GM12878 (cell line): ENCODE measurements at regions of chr2 and their contacts with region 1.

Region 1: DNA sequence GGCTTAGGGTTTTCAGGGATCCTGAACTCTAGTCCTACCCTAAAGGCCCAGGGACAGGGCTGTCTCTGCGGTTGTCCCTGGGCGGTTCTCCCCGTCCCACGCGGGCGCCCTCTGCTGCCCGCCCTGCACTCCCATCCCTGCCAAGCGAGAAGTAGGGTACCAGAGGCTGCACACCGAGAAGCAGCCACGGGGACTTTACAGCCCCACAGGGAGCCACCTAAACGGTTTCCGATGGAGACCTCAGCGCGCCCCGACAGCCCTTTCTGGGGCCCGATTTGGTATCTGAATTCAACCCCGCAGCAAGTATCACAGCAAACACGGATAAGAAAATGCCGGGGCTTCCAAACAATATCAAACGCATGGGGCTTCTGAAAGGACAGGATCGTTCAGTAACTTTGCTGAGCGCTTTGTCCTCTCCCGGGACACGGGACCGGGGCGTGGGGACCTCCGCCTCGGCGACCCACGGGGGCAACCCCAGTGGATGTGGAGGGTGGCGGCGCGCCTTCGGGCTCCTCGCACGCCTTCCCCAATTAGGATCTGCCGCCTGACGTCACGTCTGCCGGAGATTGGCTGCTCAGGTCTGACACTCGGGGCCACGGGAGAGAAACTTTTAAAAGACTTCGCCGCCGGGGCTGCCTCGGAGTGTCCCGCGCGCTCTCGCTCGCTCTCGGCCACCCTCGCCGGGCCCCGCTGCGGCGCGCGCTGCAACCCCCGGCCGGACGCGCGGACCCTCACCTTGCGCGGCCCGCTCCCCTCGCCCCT is at the start of gene LTBP1:
- DNase-seq: no peak
- ATAC-seq: peak; percentile 94
- H3K4me3 ChIP-seq: peak within 1 kb of the TSS; percentile 65
- H3K27ac ChIP-seq: no peak within 1 kb of the TSS
- H3K4me1 ChIP-seq: peaks cover 4% of the 10 kb centered on the region; the same call in 1 of the 2 replicates
- H3K27me3 ChIP-seq: peaks cover 0 to 6% of the 10 kb centered on the region in 2 experiments
- CTCF ChIP-seq: peak; percentile 64 to 81 (median 73)
- EP300 ChIP-seq: no peak
- POLR2A ChIP-seq: no peak
- RAD21 ChIP-seq: peak; percentile 60
- polyA plus RNA-seq, gene LTBP1: not detected

Region 2: GRCh38 chr2:32553829-32554432 is 392.6 kb before region 1 on chr2:
- CTCF ChIA-PET with region 1: no interaction called
- POLR2A ChIA-PET with region 1: no interaction called
- RAD21 ChIA-PET with region 1: no interaction called
- SMC1A ChIA-PET with region 1: no interaction called
- in situ Hi-C with region 1: no loop called
- intact Hi-C with region 1: loop called (anchors 5 kb)
- DNase-seq: peak; percentile 19
- ATAC-seq: peak; percentile 99
- H3K4me3 ChIP-seq: no peak overlapping the region
- H3K27ac ChIP-seq: no peak overlapping the region
- H3K4me1 ChIP-seq: peaks cover 4% of the 10 kb centered on the region
- H3K27me3 ChIP-seq: no peaks in the 10 kb centered on the region
- CTCF ChIP-seq: peak; percentile 66 to 75 (median 70)
- EP300 ChIP-seq: no peak
- POLR2A ChIP-seq: no peak
- RAD21 ChIP-seq: peak; percentile 76

Region 3: GRCh38 chr2:32904751-32905150 is 41.7 kb before region 1 on chr2:
- CTCF ChIA-PET with region 1: no interaction called
- POLR2A ChIA-PET with region 1: no interaction called
- RAD21 ChIA-PET with region 1: no interaction called
- SMC1A ChIA-PET with region 1: no interaction called
- in situ Hi-C with region 1: no loop called
- intact Hi-C with region 1: no loop called
- DNase-seq: no peak
- ATAC-seq: no peak
- H3K4me3 ChIP-seq: no peak overlapping the region
- H3K27ac ChIP-seq: no peak overlapping the region
- H3K4me1 ChIP-seq: peaks cover 17% of the 10 kb centered on the region
- H3K27me3 ChIP-seq: no peaks in the 10 kb centered on the region
- CTCF ChIP-seq: no peak
- EP300 ChIP-seq: no peak
- POLR2A ChIP-seq: no peak
- RAD21 ChIP-seq: no peak

Region 4: DNA sequence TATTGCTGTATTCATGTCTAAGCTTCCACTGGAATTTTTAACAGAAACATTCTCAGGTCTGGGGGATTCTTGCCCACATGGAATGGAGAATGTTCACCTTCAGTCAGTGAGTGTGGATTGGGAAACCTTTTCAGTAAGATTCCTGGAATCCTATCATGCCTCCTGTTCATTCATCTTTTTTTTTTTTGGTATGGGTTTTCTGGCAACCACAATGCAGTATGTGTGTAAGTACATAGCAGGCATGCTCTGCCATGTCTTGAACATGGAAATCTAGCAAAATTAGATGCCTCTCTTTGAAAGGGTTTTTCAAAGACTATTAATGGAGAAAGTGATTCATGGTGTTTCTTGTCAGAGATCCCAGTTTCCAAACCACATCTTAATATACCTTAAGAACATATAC is 176.7 kb after region 1 on chr2:
- CTCF ChIA-PET with region 1: no interaction called
- POLR2A ChIA-PET with region 1: no interaction called
- RAD21 ChIA-PET with region 1: no interaction called
- SMC1A ChIA-PET with region 1: no interaction called
- in situ Hi-C with region 1: no loop called
- intact Hi-C with region 1: no loop called
- DNase-seq: no peak
- ATAC-seq: no peak
- H3K4me3 ChIP-seq: no peak overlapping the region
- H3K27ac ChIP-seq: no peak overlapping the region
- H3K4me1 ChIP-seq: no peaks in the 10 kb centered on the region
- H3K27me3 ChIP-seq: no peaks in the 10 kb centered on the region
- CTCF ChIP-seq: no peak
- EP300 ChIP-seq: no peak
- POLR2A ChIP-seq: no peak
- RAD21 ChIP-seq: no peak